RWPE1 (cell line): ENCODE measurements at regions of chr17 and their contacts with region 1.

Region 1: DNA sequence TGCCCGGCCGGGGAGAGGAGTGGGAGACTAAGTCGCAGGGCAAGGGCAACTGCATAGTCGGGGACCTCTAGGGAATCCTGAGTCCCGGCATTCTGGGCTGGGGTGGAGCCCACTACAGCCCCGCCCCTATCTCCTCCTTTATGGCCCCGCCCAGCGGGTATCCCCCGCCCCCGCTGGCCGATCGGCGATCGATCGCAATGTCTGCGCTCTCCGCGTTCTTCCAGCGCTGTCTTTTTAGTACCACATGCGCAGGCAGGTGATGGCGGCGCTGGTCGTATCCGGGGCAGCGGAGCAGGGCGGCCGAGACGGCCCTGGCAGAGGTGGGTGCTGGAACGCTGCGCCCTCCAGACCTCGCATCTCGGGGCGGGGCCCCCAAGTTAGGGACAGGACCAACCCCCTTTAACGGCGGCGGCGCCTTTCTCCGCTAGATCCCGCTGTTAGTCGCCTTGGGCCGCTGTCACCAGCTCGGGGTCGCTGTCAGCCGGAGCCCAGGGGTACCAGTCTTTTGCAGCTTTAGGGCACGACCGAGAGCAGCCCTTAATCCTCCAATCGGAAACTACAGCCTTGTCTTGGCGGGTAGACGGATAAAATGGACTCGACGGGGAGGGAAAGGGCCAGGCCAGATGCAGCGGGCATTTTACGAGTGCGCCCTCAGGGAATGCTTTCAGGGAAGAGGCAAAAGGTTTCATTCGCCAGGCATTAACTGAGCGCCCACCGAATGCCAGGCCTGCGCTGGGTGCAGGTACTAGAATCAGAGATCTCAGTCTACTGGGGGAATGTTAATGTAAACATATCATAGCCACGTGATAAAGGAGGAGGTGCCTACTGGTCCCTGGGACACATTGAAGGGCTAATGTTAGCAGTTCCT is at the start of gene DPH1:
- DNase-seq: peak; percentile 90
- H3K27ac ChIP-seq: peak within 1 kb of the TSS; percentile 76
- CTCF ChIP-seq: no peak

Region 2: GRCh38 chr17:1908699-1909309 is 121.3 kb before region 1 on chr17:
- CTCF ChIA-PET with region 1: interaction called, 53 read pairs
- POLR2A ChIA-PET with region 1: interaction called, 3 read pairs
- DNase-seq: peak; percentile 75
- H3K27ac ChIP-seq: no peak overlapping the region
- CTCF ChIP-seq: peak; percentile 76

Region 3: DNA sequence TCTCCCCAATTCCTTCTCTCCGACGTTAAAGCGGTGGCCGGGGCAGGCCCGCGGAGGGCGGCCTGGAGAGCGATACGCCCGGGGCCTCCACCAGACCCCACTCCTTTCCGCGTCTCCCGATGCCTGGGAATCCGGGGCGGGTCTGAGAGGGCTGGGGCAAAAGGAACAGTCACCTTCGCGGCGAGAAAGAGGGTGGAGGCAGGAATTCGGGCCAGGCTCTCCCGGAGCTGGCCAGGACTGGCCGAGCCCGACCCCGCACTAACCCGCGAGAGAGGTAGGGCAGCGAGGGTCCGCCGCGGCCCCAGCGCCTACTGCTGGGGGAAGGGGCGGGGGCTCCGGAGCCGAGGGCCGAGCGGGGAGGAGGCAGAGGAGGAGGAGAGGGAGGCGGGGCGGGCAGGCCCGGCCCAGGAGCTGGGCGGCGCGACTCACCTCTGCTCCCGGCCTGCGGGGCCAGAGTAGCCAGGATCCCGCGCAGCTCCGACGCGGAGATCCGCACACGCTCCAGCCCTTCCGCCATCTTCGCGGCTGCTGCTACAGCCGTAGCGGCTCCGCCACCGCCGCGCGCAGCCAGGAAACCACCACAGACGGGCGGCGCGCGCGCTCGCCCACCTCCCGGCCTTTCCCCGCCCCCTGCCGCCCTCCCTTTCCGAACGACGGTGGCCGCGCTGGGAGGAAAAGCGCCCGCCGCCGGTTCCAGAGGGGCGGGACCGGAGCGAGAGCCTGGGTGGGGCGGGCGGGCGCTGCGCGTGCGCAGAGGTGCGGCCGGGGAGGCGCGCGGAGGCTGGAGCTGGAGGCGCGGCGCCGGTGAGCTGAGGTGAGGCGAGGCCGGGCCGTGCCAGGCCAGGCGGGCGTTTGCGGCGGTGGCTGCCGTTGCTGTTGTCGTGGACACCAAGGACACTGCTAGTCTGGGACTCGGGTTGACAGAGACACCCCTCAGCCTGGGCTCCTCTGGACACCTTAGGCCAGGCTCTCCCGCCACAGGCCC is 273.4 kb after region 1 on chr17 and contains the starts of genes SMG6 and SRR:
- CTCF ChIA-PET with region 1: interaction called, 10 read pairs
- POLR2A ChIA-PET with region 1: no interaction called
- DNase-seq: peak; percentile 99
- H3K27ac ChIP-seq: peak within 1 kb of the TSS; percentile 92
- CTCF ChIP-seq: no peak

Region 4: DNA sequence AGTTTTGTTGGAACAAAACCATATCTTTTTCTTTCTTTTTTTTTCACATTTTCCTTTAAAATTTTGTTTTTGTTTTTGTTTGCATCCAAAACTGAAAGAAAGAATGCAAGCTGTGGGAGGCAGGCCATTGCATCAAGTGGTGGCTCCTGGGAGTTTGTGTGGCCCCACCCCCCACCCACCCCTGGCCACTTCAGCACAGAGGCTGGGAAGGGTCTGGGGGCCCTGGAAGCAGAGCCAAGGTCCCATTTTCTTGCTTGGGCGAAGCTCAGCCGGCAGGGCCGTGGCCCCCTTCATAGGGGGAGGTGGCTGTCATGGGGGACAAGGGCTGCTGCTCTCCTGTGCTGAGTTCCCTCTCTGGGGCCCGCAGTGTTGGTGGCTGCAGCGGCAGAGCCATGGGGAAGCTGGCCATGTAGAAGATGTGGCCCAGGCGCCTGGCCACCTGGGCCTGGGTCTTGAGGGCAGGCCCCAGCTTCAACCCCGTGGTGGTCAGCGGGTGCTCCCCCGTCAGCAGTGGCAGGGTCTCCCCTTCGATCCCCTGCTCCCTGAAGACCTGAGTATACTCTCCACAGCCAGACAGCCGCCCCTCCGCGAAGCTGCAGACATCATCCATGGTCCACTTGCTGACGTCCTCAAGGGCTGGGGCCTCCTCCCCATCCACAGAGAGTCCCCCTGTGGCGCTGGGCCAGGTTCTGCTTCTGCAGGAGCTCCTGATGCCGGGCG is 583.1 kb after region 1 on chr17:
- CTCF ChIA-PET with region 1: no interaction called
- POLR2A ChIA-PET with region 1: no interaction called
- DNase-seq: no peak
- H3K27ac ChIP-seq: no peak overlapping the region
- CTCF ChIP-seq: no peak